H1 (cell line): ENCODE measurements at regions of chr2 and their contacts with region 1.

Region 1: DNA sequence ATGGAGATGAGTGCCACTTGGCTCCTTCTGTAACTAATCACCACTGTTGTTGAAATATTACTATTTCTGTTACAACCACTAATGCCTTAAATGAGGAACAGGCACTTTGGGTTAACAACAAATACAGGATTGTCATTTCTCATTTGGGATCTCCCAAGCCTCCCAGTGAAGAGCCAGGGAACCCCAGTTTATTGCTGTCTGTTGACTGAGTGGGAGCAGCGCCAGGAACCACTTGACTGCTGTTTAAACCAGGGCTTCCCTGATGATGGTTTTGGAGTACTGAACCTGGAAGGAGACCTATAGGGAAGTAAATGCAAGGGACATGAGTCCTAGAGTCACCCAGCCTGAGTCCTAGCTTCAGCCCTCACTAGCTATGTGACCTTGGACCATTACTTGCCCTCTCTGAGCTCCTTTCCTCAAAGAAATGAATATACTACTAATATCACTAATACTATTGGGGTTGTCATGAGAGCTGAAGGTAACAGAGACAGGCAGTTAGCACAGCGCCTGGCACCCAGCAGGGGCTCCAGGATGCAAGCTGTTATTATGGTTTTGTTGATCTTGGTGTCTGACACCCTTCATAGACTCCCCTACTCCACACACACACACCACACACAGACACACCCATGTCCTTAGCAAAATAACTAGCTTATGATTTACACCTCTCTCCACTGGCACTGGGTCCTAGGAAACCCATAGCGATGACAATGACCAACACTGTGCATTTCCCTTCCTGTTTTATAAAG is 104.2 kb upstream of the FZD7 start:
- DNase-seq: no peak
- H3K4me3 ChIP-seq: no peak overlapping the region
- H3K27ac ChIP-seq: no peak overlapping the region
- H3K4me1 ChIP-seq: peaks cover 3 to 15% (median 10%) of the 10 kb centered on the region in 4 experiments
- H3K27me3 ChIP-seq: no peaks in the 10 kb centered on the region
- CTCF ChIP-seq: no peak
- EP300 ChIP-seq: no peak
- POLR2A ChIP-seq: no peak
- RAD21 ChIP-seq: no peak

Region 2: GRCh38 chr2:201872591-201872990 is 56.9 kb before region 1 on chr2:
- CTCF ChIA-PET with region 1: no interaction called
- POLR2A ChIA-PET with region 1: no interaction called
- DNase-seq: no peak
- H3K4me3 ChIP-seq: no peak overlapping the region
- H3K27ac ChIP-seq: no peak overlapping the region
- H3K4me1 ChIP-seq: peaks cover 0 to 5% (median 2%) of the 10 kb centered on the region in 4 experiments; a peak in 3 of 7 replicates
- H3K27me3 ChIP-seq: no peaks in the 10 kb centered on the region; a peak in 1 of 7 replicates
- CTCF ChIP-seq: no peak
- EP300 ChIP-seq: no peak
- POLR2A ChIP-seq: no peak
- RAD21 ChIP-seq: no peak

Region 3: DNA sequence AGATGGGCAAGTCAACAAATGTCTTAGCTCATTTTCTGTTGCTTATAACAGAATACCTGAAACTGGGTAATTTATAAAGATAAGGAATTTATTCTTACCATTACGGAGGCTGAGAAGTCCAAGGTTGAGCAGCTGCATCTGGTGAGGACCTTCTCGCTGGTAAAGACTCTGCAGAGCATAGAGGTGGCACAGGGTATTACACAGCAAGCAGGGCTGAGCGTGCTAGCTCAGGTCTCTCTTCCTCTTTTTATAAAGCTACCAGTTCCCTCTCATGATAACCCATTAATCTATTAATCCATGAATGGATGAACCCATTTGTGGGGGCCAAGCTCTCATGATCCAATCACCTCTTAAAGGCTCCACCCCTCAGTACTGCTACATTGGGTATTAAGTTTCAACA is 14.0 kb before region 1 on chr2:
- CTCF ChIA-PET with region 1: interaction called, 5 read pairs
- POLR2A ChIA-PET with region 1: interaction called, 10 read pairs
- DNase-seq: no peak
- H3K4me3 ChIP-seq: no peak overlapping the region
- H3K27ac ChIP-seq: no peak overlapping the region
- H3K4me1 ChIP-seq: peaks cover 0 to 21% (median 6%) of the 10 kb centered on the region in 4 experiments; a peak in 5 of 7 replicates
- H3K27me3 ChIP-seq: no peaks in the 10 kb centered on the region
- CTCF ChIP-seq: peak in 1 of 3 experiments; percentile 21; a peak in 1 of 4 replicates
- EP300 ChIP-seq: no peak
- POLR2A ChIP-seq: no peak
- RAD21 ChIP-seq: no peak